Breast epithelium (tissue), 4 donors: ENCODE measurements at regions of chr6 and their contacts with region 1.

Region 1: GRCh38 chr6:42166444-42167141 is 6.6 kb upstream of the GUCA1A start:
- DNase-seq: peak; percentile 24 to 64
- H3K4me3 ChIP-seq: no peak overlapping the region
- H3K27ac ChIP-seq: peak overlapping the region; percentile 17 to 30
- H3K4me1 ChIP-seq: no peaks in the 10 kb centered on the region
- H3K27me3 ChIP-seq: no peaks in the 10 kb centered on the region
- CTCF ChIP-seq: peak; percentile 88 to 94 (median 93)
- POLR2A ChIP-seq: no peak

Region 2: GRCh38 chr6:41531591-41532582 is 634.7 kb before region 1 on chr6:
- intact Hi-C with region 1: no loop called
- DNase-seq: no peak
- H3K4me3 ChIP-seq: peak overlapping the region in 2 of 3 donors; percentile 11 to 40
- H3K27ac ChIP-seq: peak overlapping the region in 1 of 2 donors; percentile 35
- H3K4me1 ChIP-seq: peaks cover 5 to 16% of the 10 kb centered on the region in 2 donors
- H3K27me3 ChIP-seq: no peaks in the 10 kb centered on the region
- CTCF ChIP-seq: no peak
- POLR2A ChIP-seq: no peak

Region 3: GRCh38 chr6:42075159-42075838 is 91.3 kb before region 1 on chr6:
- intact Hi-C with region 1: loop called (anchors 10 kb)
- DNase-seq: peak; percentile 81 to 89
- H3K4me3 ChIP-seq: no peak overlapping the region
- H3K27ac ChIP-seq: no peak overlapping the region
- H3K4me1 ChIP-seq: no peaks in the 10 kb centered on the region
- H3K27me3 ChIP-seq: no peaks in the 10 kb centered on the region
- CTCF ChIP-seq: peak; percentile 70 to 91 (median 86)
- POLR2A ChIP-seq: no peak